ENCODE measurements at regions of chr15 and their contacts with region 1.

Region 1: DNA sequence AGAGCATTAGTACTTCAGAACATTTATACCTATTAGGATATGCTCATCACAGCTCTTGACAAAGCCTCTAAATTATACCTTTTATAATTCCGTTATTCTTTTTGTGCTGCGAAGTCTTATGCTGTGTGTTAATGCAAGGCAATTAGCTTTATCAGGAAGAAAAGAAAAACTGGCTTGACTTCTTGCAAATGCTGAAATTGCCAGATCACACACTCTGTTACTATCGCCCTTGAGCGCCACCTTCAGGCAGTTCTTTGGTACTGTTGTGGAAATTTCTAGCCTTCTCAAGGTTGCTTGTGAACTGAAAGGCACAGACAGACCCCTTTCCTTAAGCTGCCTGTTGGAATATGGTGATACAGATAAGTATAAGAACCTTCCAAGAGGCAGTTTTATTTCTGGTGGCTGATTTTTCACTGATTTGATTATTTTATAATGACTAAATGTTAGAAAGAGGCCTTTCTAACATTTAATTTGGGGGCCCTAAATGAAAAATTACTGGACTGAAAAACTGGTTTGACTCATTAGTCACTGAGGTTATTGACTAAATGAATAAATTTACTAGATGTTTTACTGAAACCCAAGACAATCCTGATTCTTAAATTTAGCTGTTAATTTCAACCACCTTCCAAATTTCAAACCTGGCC is 126.2 kb upstream of the RASGRP1 start:
- DNase-seq: peak; percentile 79 to 83 (median 81)
- H3K4me3 ChIP-seq: no peak overlapping the region
- H3K4me3 Mint-ChIP-seq: peak overlapping the region in 3 of 8 donors; percentile 46 to 83 (median 54)
- H3K27ac ChIP-seq: no peak overlapping the region
- H3K27ac Mint-ChIP-seq: peak overlapping the region in 6 of 7 donors; percentile 64 to 93 (median 90)
- H3K4me1 ChIP-seq: peaks cover 77% of the 10 kb centered on the region
- H3K4me1 Mint-ChIP-seq: peaks cover 64 to 83% (median 70%) of the 10 kb centered on the region in 4 donors
- H3K27me3 ChIP-seq: no peaks in the 10 kb centered on the region
- H3K27me3 Mint-ChIP-seq: no peaks in the 10 kb centered on the region

Region 2: DNA sequence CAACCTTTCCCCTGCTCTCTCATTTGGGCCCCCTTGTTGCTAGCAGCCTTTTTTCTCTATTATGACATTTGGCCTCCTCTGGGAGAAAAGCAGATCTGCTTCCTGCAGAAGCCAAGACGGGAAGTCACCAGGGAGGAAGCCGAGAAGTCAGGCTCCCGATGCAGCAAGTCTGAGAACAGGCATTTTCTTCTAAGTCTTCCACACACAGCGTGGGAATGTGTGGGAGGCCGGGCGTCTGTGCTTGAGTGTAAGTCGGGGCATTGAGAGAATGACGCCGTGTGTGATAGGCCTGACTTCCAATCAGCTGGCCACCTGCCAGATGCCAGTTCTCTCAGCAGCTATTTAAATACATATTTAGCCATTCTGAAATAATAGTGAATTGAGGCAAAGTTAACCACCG is 312.6 kb before region 1 on chr15:
- CTCF ChIA-PET with region 1: no interaction called
- POLR2A ChIA-PET with region 1: no interaction called
- intact Hi-C with region 1: no loop called
- DNase-seq: no peak
- H3K4me3 ChIP-seq: no peak overlapping the region
- H3K4me3 Mint-ChIP-seq: no peak overlapping the region
- H3K27ac ChIP-seq: no peak overlapping the region
- H3K27ac Mint-ChIP-seq: no peak overlapping the region
- H3K4me1 ChIP-seq: no peaks in the 10 kb centered on the region
- H3K4me1 Mint-ChIP-seq: no peaks in the 10 kb centered on the region
- H3K27me3 ChIP-seq: no peaks in the 10 kb centered on the region
- H3K27me3 Mint-ChIP-seq: peaks cover 22 to 39% of the 10 kb centered on the region in 2 donors

Region 3: DNA sequence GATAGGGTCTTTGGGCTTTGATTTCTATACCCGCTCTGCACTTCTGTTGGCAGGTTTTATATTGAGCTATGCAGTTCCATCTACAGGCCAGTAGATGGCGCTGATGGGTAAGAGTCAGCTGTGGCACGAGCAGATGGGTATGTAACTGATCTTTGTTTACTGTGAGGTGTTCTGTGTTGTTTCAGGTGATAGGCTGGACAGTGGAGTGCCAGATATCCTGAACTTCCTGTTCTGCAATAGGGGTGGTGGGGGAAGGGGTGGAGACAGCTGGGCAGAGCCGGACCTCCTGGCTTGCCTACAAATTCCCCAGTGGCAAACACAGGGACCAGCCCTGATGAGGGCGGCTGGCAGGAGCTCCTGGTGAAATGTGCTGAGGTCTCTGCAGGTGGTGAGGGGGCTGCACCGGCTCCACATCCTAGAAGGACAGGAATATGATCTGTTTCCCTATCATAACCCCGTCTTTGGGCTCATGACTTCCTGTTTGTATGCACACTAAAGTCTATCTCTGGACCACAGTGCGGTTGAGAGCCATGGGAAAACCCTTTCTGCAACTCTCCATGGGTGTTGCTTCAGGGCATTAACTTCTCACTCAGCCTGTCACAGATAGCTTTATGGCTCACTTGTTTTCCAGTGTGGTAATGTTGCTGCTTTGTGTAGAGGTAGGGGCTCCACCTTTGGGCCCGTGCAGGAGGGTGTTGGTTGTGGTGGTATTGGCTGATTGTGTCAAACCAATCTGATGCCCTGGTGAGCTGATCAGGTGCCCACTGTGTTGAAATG is 250.3 kb before region 1 on chr15:
- CTCF ChIA-PET with region 1: interaction called, 175 read pairs
- POLR2A ChIA-PET with region 1: interaction called, 6 read pairs
- intact Hi-C with region 1: loop called (anchors 1 kb)
- DNase-seq: peak in 4 of 5 donors; percentile 59 to 66 (median 62)
- H3K4me3 ChIP-seq: no peak overlapping the region
- H3K4me3 Mint-ChIP-seq: peak overlapping the region in 1 of 8 donors; percentile 55
- H3K27ac ChIP-seq: no peak overlapping the region
- H3K27ac Mint-ChIP-seq: peak overlapping the region in 1 of 7 donors; percentile 12
- H3K4me1 ChIP-seq: peaks cover 5% of the 10 kb centered on the region
- H3K4me1 Mint-ChIP-seq: peaks cover 0 to 7% (median 3%) of the 10 kb centered on the region in 4 donors
- H3K27me3 ChIP-seq: no peaks in the 10 kb centered on the region
- H3K27me3 Mint-ChIP-seq: peaks cover 20 to 21% of the 10 kb centered on the region in 2 donors

Region 4: GRCh38 chr15:38474155-38474757 is 216.6 kb before region 1 on chr15:
- CTCF ChIA-PET with region 1: interaction called, 196 read pairs
- POLR2A ChIA-PET with region 1: interaction called, 15 read pairs
- intact Hi-C with region 1: loop called (anchors 1 kb)
- DNase-seq: peak; percentile 57 to 73 (median 69)
- H3K4me3 ChIP-seq: no peak overlapping the region
- H3K4me3 Mint-ChIP-seq: peak overlapping the region in 1 of 8 donors; percentile 2
- H3K27ac ChIP-seq: peak overlapping the region; percentile 25
- H3K27ac Mint-ChIP-seq: peak overlapping the region; percentile 59 to 86 (median 81)
- H3K4me1 ChIP-seq: peaks cover 5% of the 10 kb centered on the region
- H3K4me1 Mint-ChIP-seq: peaks cover 8 to 9% (median 8%) of the 10 kb centered on the region in 4 donors
- H3K27me3 ChIP-seq: no peaks in the 10 kb centered on the region
- H3K27me3 Mint-ChIP-seq: no peaks in the 10 kb centered on the region

Region 5: GRCh38 chr15:38490242-38490922 is 200.4 kb before region 1 on chr15:
- CTCF ChIA-PET with region 1: interaction called, 15 read pairs
- POLR2A ChIA-PET with region 1: interaction called, 7 read pairs
- intact Hi-C with region 1: no loop called
- DNase-seq: no peak
- H3K4me3 ChIP-seq: no peak overlapping the region
- H3K4me3 Mint-ChIP-seq: peak overlapping the region in 1 of 8 donors; percentile 2
- H3K27ac ChIP-seq: no peak overlapping the region
- H3K27ac Mint-ChIP-seq: peak overlapping the region; percentile 8 to 92 (median 64)
- H3K4me1 ChIP-seq: peaks cover 29% of the 10 kb centered on the region
- H3K4me1 Mint-ChIP-seq: peaks cover 28 to 34% (median 33%) of the 10 kb centered on the region in 4 donors
- H3K27me3 ChIP-seq: no peaks in the 10 kb centered on the region
- H3K27me3 Mint-ChIP-seq: no peaks in the 10 kb centered on the region

Region 6: GRCh38 chr15:38504680-38505467 is 185.9 kb before region 1 on chr15:
- CTCF ChIA-PET with region 1: interaction called, 55 read pairs
- POLR2A ChIA-PET with region 1: interaction called, 5 read pairs
- intact Hi-C with region 1: no loop called
- DNase-seq: no peak
- H3K4me3 ChIP-seq: no peak overlapping the region
- H3K4me3 Mint-ChIP-seq: no peak overlapping the region
- H3K27ac ChIP-seq: no peak overlapping the region
- H3K27ac Mint-ChIP-seq: peak overlapping the region in 6 of 7 donors; percentile 38 to 89 (median 59)
- H3K4me1 ChIP-seq: peaks cover 3% of the 10 kb centered on the region
- H3K4me1 Mint-ChIP-seq: peaks cover 2 to 15% (median 7%) of the 10 kb centered on the region in 4 donors
- H3K27me3 ChIP-seq: no peaks in the 10 kb centered on the region
- H3K27me3 Mint-ChIP-seq: no peaks in the 10 kb centered on the region

Region 7: GRCh38 chr15:38521316-38521715 is 169.5 kb before region 1 on chr15:
- CTCF ChIA-PET with region 1: interaction called, 13 read pairs
- POLR2A ChIA-PET with region 1: interaction called, 4 read pairs
- intact Hi-C with region 1: no loop called
- DNase-seq: no peak
- H3K4me3 ChIP-seq: no peak overlapping the region
- H3K4me3 Mint-ChIP-seq: no peak overlapping the region
- H3K27ac ChIP-seq: no peak overlapping the region
- H3K27ac Mint-ChIP-seq: peak overlapping the region; percentile 57 to 87 (median 78)
- H3K4me1 ChIP-seq: peaks cover 39% of the 10 kb centered on the region
- H3K4me1 Mint-ChIP-seq: peaks cover 41 to 61% (median 51%) of the 10 kb centered on the region in 4 donors
- H3K27me3 ChIP-seq: no peaks in the 10 kb centered on the region
- H3K27me3 Mint-ChIP-seq: no peaks in the 10 kb centered on the region

Region 8: DNA sequence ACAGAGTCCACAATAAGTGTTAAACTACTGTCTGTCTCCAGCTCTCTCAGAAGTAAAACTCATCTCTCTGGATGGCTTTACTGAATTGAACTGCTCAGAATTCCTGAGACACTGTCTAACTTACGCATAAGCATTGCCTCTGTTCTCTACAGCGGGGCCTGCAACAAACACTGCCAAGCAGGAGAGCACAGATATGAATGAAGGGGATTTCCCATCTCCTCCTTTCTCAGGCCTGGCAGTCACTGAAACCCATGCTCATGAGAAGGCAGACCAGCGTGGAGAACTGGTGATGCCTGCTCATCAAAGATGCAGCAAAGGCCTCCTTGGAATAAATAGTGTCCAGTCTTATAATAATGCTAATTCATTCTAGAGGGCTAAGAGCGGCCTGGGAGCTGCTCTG is 136.5 kb before region 1 on chr15:
- CTCF ChIA-PET with region 1: interaction called, 717 read pairs
- POLR2A ChIA-PET with region 1: interaction called, 452 read pairs
- intact Hi-C with region 1: no loop called
- DNase-seq: peak in 3 of 5 donors; percentile 37 to 74 (median 51)
- H3K4me3 ChIP-seq: peak overlapping the region in 1 of 2 donors; percentile 10
- H3K4me3 Mint-ChIP-seq: peak overlapping the region; percentile 3 to 99 (median 89)
- H3K27ac ChIP-seq: peak overlapping the region; percentile 89
- H3K27ac Mint-ChIP-seq: peak overlapping the region; percentile 64 to 97 (median 79)
- H3K4me1 ChIP-seq: peaks cover 100% of the 10 kb centered on the region
- H3K4me1 Mint-ChIP-seq: peaks cover 80 to 94% (median 88%) of the 10 kb centered on the region in 4 donors
- H3K27me3 ChIP-seq: no peaks in the 10 kb centered on the region
- H3K27me3 Mint-ChIP-seq: no peaks in the 10 kb centered on the region